GM12878 (cell line): ENCODE measurements at regions of chr1 and their contacts with region 1.

Region 1: GRCh38 chr1:203340112-203340804 is 10.7 kb downstream of the FMOD start:
- DNase-seq: no peak
- ATAC-seq: peak; percentile 86
- H3K4me3 ChIP-seq: no peak overlapping the region
- H3K27ac ChIP-seq: no peak overlapping the region
- H3K4me1 ChIP-seq: no peaks in the 10 kb centered on the region
- H3K27me3 ChIP-seq: peaks cover 0 to 6% of the 10 kb centered on the region in 2 experiments; a peak in 1 of 4 replicates
- CTCF ChIP-seq: peak; percentile 84 to 95 (median 92)
- EP300 ChIP-seq: no peak
- POLR2A ChIP-seq: no peak
- RAD21 ChIP-seq: peak; percentile 96

Region 2: DNA sequence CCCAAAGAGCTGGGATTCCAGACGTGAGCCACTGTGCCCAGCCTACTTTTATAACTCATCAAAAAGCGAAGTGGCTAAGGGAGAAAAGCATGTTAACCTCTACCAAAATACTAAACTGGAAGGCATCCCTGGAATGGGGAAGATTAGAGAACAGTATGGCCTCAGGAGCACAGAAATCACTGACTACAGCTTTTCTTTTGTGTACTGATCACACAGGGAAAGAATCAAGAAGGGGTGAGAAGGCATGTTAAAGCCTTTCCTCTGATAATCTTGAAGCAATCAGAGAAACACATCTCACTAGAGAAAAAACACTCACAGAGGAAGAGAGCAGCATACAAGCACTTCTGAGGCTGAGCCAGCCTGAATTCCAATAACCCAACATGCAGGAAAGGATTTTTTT is 518.8 kb before region 1 on chr1:
- CTCF ChIA-PET with region 1: no interaction called
- POLR2A ChIA-PET with region 1: no interaction called
- RAD21 ChIA-PET with region 1: no interaction called
- SMC1A ChIA-PET with region 1: no interaction called
- in situ Hi-C with region 1: no loop called
- intact Hi-C with region 1: no loop called
- DNase-seq: no peak
- ATAC-seq: no peak
- H3K4me3 ChIP-seq: no peak overlapping the region
- H3K27ac ChIP-seq: no peak overlapping the region
- H3K4me1 ChIP-seq: no peaks in the 10 kb centered on the region
- H3K27me3 ChIP-seq: no peaks in the 10 kb centered on the region
- CTCF ChIP-seq: no peak
- EP300 ChIP-seq: no peak
- POLR2A ChIP-seq: no peak
- RAD21 ChIP-seq: no peak

Region 3: GRCh38 chr1:203273206-203273868 is 66.9 kb before region 1 on chr1:
- CTCF ChIA-PET with region 1: interaction called, 854 read pairs
- POLR2A ChIA-PET with region 1: interaction called, 39 read pairs
- RAD21 ChIA-PET with region 1: interaction called, 501 read pairs
- SMC1A ChIA-PET with region 1: interaction called, 508 read pairs
- in situ Hi-C with region 1: loop called (anchors 5 kb)
- intact Hi-C with region 1: loop called (anchors 1 kb)
- DNase-seq: peak; percentile 72
- ATAC-seq: peak; percentile 85
- H3K4me3 ChIP-seq: peak overlapping the region; percentile 63
- H3K27ac ChIP-seq: peak overlapping the region; percentile 89
- H3K4me1 ChIP-seq: peaks cover 41% of the 10 kb centered on the region
- H3K27me3 ChIP-seq: no peaks in the 10 kb centered on the region
- CTCF ChIP-seq: peak; percentile 90 to 95 (median 90)
- EP300 ChIP-seq: no peak
- POLR2A ChIP-seq: peak; percentile 70
- RAD21 ChIP-seq: peak; percentile 97

Region 4: GRCh38 chr1:203326830-203327683 is 13.2 kb before region 1 on chr1:
- CTCF ChIA-PET with region 1: interaction called, 71 read pairs
- POLR2A ChIA-PET with region 1: interaction called, 7 read pairs
- RAD21 ChIA-PET with region 1: interaction called, 53 read pairs
- SMC1A ChIA-PET with region 1: interaction called, 96 read pairs
- in situ Hi-C with region 1: no loop called
- intact Hi-C with region 1: no loop called
- DNase-seq: peak; percentile 88
- ATAC-seq: peak; percentile 81
- H3K4me3 ChIP-seq: peak overlapping the region; percentile 60
- H3K27ac ChIP-seq: peak overlapping the region; percentile 98
- H3K4me1 ChIP-seq: peaks cover 62% of the 10 kb centered on the region
- H3K27me3 ChIP-seq: no peaks in the 10 kb centered on the region
- CTCF ChIP-seq: peak in 2 of 3 experiments; percentile 12 to 22; a peak in 1 of 6 replicates
- EP300 ChIP-seq: peak; percentile 62 to 85; a peak in 3 of 4 replicates
- POLR2A ChIP-seq: peak; percentile 78
- RAD21 ChIP-seq: no peak

Region 5: DNA sequence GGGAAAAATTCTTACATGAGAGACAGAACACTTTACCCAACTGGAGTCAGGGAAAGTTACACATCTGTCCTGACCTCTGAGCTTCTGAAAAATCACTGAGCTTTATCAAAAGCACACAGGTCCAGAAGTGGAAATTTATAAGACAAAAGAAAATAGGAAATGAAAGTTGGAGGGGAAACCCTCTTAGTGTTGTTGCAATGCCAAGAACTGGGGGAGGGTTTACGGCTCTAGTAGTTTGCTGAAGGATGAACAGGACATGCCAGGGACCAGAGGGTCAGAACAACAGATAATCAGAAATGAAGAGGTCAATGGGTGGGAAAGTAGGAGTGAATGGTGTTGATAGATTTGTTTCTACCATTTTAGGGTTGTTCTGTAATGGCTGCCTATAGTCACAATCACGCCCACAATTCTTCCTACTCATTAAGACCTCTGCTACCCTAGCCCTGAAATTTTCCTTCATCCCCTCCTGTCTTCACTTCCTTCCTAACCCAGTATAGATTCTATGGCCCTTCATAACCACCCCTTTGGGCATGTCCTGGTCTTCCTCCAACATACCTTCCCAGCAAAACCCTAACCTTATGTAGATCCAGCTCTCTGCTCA is 41.0 kb after region 1 on chr1:
- CTCF ChIA-PET with region 1: interaction called, 20 read pairs
- POLR2A ChIA-PET with region 1: interaction called, 3 read pairs
- RAD21 ChIA-PET with region 1: interaction called, 23 read pairs
- SMC1A ChIA-PET with region 1: interaction called, 45 read pairs
- in situ Hi-C with region 1: no loop called
- intact Hi-C with region 1: no loop called
- DNase-seq: peak; percentile 70
- ATAC-seq: peak; percentile 95
- H3K4me3 ChIP-seq: peak overlapping the region; percentile 50
- H3K27ac ChIP-seq: peak overlapping the region; percentile 81
- H3K4me1 ChIP-seq: peaks cover 25% of the 10 kb centered on the region
- H3K27me3 ChIP-seq: no peaks in the 10 kb centered on the region
- CTCF ChIP-seq: no peak
- EP300 ChIP-seq: peak in 1 of 2 experiments; percentile 86; a peak in 3 of 4 replicates
- POLR2A ChIP-seq: no peak
- RAD21 ChIP-seq: no peak

Region 6: DNA sequence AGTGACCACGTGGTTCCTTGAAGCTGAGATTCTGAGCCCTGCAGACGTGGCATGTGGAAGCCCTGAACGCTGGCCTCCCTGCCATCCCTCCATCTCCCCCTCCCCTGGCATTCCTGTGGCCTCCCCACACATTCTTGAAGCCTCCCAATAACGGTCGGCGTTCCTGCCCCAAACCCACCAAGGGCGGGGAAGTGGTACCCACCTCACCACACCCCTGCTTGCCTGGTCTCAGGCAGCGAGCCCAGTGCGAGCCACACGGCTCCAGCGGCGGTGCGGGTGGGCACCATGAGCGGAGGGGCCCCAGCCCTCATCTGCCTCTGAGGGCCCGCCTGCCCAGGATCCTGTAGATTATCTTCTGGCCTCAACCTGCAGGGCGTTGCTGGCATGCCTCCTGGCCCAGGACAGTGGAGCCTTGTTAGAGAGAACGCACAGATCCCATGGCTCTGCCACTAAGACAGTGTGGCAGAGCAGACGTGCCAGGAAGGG is 114.8 kb after region 1 on chr1:
- CTCF ChIA-PET with region 1: interaction called, 73 read pairs
- POLR2A ChIA-PET with region 1: interaction called, 3 read pairs
- RAD21 ChIA-PET with region 1: interaction called, 3 read pairs
- SMC1A ChIA-PET with region 1: interaction called, 10 read pairs
- in situ Hi-C with region 1: no loop called
- intact Hi-C with region 1: no loop called
- DNase-seq: no peak
- ATAC-seq: no peak
- H3K4me3 ChIP-seq: no peak overlapping the region
- H3K27ac ChIP-seq: no peak overlapping the region
- H3K4me1 ChIP-seq: peaks cover 3% of the 10 kb centered on the region; the same call in 1 of the 2 replicates
- H3K27me3 ChIP-seq: no peaks in the 10 kb centered on the region
- CTCF ChIP-seq: no peak
- EP300 ChIP-seq: no peak
- POLR2A ChIP-seq: no peak
- RAD21 ChIP-seq: no peak

Region 7: DNA sequence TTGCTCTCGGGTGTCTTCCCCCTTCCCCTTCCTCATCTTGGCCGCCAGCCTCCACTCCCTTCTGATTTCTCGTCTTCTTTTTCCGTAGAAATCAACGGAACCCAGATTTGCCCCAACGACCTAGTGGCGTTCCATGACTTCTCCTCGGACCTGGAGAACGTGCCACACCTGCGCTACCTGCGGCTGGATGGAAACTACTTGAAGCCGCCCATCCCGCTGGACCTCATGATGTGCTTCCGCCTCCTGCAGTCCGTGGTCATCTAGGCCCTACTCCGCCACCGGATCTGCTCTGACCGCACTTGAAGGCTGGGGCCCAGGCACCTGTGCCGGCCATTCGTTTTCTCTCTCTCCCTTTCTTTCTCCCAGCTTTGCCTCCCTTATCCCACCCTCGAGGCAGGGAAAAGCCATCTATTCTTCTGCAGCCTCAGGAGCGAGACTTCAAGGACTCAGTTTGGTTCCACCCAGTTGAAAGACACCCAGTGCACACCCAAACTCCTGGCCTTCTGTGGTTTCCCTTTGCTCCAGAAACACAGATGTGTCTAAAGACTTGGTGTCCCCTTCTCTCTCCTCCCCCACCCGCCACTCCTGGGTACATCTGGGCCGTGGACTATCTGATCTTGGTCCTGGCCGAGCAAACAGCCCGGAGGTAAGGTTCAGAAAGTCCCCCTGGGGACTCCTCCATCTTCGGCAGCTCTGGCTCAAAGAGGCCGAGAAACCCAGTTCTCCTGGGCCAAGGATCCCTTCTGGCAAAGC is 146.5 kb after region 1 on chr1:
- CTCF ChIA-PET with region 1: interaction called, 323 read pairs
- POLR2A ChIA-PET with region 1: interaction called, 4 read pairs
- RAD21 ChIA-PET with region 1: interaction called, 141 read pairs
- SMC1A ChIA-PET with region 1: interaction called, 152 read pairs
- in situ Hi-C with region 1: loop called (anchors 5 kb)
- intact Hi-C with region 1: loop called (anchors 1 kb)
- DNase-seq: no peak
- ATAC-seq: peak; percentile 7; the same call in 2 of the 3 replicates
- H3K4me3 ChIP-seq: no peak overlapping the region
- H3K27ac ChIP-seq: no peak overlapping the region
- H3K4me1 ChIP-seq: 0 out of 2 replicates have a peak, but pooled peaks cover 3% of the 10 kb centered on the region
- H3K27me3 ChIP-seq: peaks cover 0 to 10% of the 10 kb centered on the region in 2 experiments; a peak in 2 of 4 replicates
- CTCF ChIP-seq: no peak
- EP300 ChIP-seq: no peak
- POLR2A ChIP-seq: no peak
- RAD21 ChIP-seq: no peak